Prostate gland (tissue), 2 donors: ENCODE measurements at regions of chr4 and their contacts with region 1.

Region 1: GRCh38 chr4:114659386-114660008 is 60.9 kb downstream of the UGT8 start:
- DNase-seq: peak; percentile 49
- H3K4me3 ChIP-seq: no peak overlapping the region
- H3K27ac ChIP-seq: no peak overlapping the region
- H3K4me1 ChIP-seq: no peaks in the 10 kb centered on the region
- H3K27me3 ChIP-seq: no peaks in the 10 kb centered on the region
- CTCF ChIP-seq: peak in 3 of 4 experiments; percentile 56 to 72 (median 62)
- POLR2A ChIP-seq: no peak

Region 2: DNA sequence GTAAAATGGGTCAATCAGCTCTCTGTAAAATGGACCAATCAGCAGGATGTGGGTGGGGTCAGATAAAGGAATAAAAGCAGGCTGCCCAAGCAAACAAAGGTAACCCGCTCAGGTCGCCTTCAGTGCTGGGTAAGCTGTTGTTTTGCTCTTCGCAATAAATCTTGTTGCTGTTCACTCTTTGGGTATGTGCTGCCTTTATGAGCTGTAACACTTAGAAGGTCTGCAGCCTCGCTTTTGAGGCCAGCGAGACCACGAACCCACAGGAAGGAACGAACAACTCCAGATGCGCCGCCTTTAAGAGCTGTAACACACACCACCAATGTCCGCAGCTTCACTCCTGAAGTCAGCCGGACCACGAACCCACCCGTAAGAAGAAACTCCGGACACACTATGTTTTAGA is 886.5 kb before region 1 on chr4:
- intact Hi-C with region 1: loop called (anchors 10 kb)
- DNase-seq: no peak
- H3K4me3 ChIP-seq: no peak overlapping the region
- H3K27ac ChIP-seq: no peak overlapping the region
- H3K4me1 ChIP-seq: no peaks in the 10 kb centered on the region
- H3K27me3 ChIP-seq: no peaks in the 10 kb centered on the region
- CTCF ChIP-seq: no peak
- POLR2A ChIP-seq: no peak

Region 3: GRCh38 chr4:114921790-114922591 is 262.5 kb after region 1 on chr4:
- intact Hi-C with region 1: no loop called
- DNase-seq: no peak
- H3K4me3 ChIP-seq: no peak overlapping the region
- H3K27ac ChIP-seq: no peak overlapping the region
- H3K4me1 ChIP-seq: no peaks in the 10 kb centered on the region
- H3K27me3 ChIP-seq: no peaks in the 10 kb centered on the region
- CTCF ChIP-seq: no peak
- POLR2A ChIP-seq: no peak

Region 4: GRCh38 chr4:115113125-115114106 is 453.9 kb after region 1 on chr4 and contains the start of gene NDST4:
- intact Hi-C with region 1: no loop called
- DNase-seq: peak; percentile 6
- H3K4me3 ChIP-seq: no peak within 1 kb of the TSS
- H3K27ac ChIP-seq: no peak within 1 kb of the TSS
- H3K4me1 ChIP-seq: no peaks in the 10 kb centered on the region
- H3K27me3 ChIP-seq: no peaks in the 10 kb centered on the region
- CTCF ChIP-seq: no peak
- POLR2A ChIP-seq: no peak
- total RNA-seq, gene NDST4: 0.14 to 1.8 TPM